MCF 10A (cell line): ENCODE measurements at regions of chr1 and their contacts with region 1.

Region 1: DNA sequence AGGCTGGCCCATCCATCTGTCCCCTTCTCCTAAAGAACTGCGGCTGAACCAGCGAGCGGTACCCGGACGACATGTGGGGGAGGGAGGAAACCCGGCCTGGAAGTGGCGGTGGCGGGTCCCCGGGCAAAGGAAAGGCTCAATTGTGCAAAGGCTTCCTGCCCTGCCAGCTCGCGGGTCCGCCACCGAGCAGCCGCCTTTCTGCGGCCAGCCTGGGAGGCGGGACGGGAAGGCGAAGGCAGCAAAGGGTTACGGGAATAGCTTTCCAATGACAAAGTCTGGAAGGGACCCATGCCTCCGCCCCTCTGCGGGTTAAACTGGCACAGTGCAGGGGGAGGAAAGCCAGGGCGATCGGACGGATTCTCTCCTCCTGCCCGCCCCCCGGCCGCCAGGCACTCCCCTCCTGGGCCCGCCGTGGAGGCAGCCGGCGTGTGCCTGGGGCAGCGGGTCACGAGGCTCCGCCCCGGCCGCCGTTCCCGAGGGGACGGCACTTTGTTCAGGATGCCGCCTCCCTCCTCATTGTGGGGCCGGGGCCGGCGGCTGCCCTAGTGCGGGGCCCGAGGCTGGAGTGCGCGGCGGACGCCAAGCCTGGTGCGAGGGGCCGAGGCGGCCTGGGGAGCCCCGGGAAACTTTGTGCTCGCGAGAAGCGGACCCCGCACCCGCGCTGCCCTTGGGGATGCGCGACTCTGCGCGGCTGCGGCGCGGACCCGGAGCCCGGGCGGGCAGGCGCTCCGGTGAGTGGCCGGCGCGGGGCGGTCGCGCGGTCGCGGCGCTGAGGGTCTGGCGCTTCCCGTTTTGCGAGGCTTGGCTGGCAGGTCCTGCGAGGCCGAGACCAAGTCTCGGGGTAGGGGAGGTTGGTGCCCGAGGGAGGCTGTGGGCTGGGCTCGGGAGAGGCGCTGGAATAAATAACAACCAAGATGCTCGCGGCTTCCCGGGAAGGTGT is at the start of gene NAV1:
- DNase-seq: peak; percentile 56
- H3K4me3 Mint-ChIP-seq: peak within 1 kb of the TSS; percentile 70
- H3K27ac Mint-ChIP-seq: no peak within 1 kb of the TSS
- H3K4me1 Mint-ChIP-seq: peaks cover 35% of the 10 kb centered on the region
- H3K27me3 Mint-ChIP-seq: no peaks in the 10 kb centered on the region
- CTCF ChIP-seq: no peak
- total RNA-seq, gene NAV1: 31.4 and 34.9 TPM in 2 replicates

Region 2: DNA sequence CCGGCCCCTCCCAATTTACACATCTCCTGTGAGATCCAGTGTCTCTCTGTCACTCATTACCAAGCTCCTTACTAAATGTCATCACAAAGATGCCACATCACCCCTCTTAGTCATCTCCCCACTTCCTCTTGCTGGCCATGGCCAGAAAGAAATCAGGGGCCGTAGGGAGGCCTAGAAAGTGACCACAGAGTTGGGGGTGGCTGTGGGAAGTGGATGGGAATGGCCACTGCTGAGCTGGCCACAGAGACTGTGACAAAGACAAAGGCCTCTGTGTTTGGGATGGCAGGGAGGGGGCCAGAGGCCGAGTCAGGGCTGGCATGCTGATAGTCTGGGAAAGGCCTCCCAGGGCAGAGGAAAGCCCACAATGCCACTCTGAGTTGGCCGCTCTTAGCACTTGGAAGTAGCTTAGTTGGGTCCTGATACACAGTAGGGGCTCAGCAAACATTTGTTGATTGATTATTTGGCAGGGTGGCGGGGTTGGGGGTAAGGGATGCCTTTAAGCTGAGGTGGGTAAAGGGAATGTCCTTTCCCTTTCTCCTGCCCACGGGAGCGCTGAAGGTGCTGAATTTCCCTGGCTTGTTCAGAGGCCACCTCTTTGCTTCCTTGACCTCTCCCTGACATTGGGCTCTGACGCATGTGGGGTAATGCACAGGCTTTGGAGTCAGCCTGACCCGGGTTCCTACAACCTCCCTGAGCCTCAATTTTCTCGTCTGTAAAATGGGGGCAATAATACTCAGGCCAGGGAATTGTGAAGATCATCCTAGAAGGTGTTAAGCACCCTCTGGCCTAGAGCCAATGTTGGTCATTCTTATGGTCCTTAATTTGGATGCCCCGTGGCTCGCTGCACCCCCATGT is 13.2 kb after region 1 on chr1:
- CTCF ChIA-PET with region 1: interaction called, 120 read pairs
- POLR2A ChIA-PET with region 1: interaction called, 5 read pairs
- intact Hi-C with region 1: no loop called
- DNase-seq: no peak
- H3K4me3 Mint-ChIP-seq: no peak overlapping the region
- H3K27ac Mint-ChIP-seq: no peak overlapping the region
- H3K4me1 Mint-ChIP-seq: no peaks in the 10 kb centered on the region
- H3K27me3 Mint-ChIP-seq: no peaks in the 10 kb centered on the region
- CTCF ChIP-seq: no peak

Region 3: GRCh38 chr1:201608635-201609395 is 69.9 kb after region 1 on chr1:
- CTCF ChIA-PET with region 1: no interaction called
- POLR2A ChIA-PET with region 1: no interaction called
- intact Hi-C with region 1: no loop called
- DNase-seq: no peak
- H3K4me3 Mint-ChIP-seq: no peak overlapping the region
- H3K27ac Mint-ChIP-seq: no peak overlapping the region
- H3K4me1 Mint-ChIP-seq: no peaks in the 10 kb centered on the region
- H3K27me3 Mint-ChIP-seq: no peaks in the 10 kb centered on the region
- CTCF ChIP-seq: no peak